Activated naive CD4-positive, alpha-beta T cell treated with anti-CD3 and anti-CD28 coated beads for 36 hours (primary cell): ENCODE measurements at regions of chr14 and their contacts with region 1.

Region 1: DNA sequence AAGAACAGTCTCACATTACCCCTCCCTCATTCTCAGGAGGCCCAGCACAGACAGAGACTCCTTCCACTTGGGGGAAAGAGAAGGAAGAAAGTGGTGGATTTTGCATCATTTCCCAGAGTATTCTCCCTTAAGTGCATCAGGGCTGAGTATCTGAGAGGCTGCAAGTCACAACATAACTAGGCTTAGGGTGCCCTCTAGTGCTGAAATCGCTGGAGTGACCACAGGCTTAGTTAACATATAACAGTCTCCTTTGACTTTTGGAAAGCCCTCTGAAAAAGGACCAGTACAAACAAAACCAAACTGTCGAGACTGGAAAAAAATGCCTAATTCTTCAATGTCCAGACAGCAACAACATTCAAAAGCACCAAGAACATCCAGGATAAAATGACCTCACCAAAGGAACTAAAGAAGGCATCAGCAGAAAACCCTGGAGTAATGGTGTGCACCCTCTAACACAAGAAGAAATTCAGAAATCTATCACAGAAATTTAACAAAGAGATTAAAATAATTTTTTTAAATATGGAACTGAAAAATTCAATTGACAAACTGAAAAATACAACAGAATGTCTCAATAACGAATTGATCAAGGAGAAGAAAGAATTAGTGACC is 412.3 kb downstream of the RPS29 start:
- DNase-seq: peak; percentile 67
- H3K4me3 Mint-ChIP-seq: no peak overlapping the region
- H3K27ac Mint-ChIP-seq: no peak overlapping the region
- H3K4me1 Mint-ChIP-seq: no peaks in the 10 kb centered on the region
- H3K27me3 Mint-ChIP-seq: peaks cover 4% of the 10 kb centered on the region

Region 2: GRCh38 chr14:48504921-48505320 is 668.9 kb before region 1 on chr14:
- CTCF ChIA-PET with region 1: no interaction called
- intact Hi-C with region 1: no loop called
- DNase-seq: no peak
- H3K4me3 Mint-ChIP-seq: no peak overlapping the region
- H3K27ac Mint-ChIP-seq: no peak overlapping the region
- H3K4me1 Mint-ChIP-seq: no peaks in the 10 kb centered on the region
- H3K27me3 Mint-ChIP-seq: no peaks in the 10 kb centered on the region

Region 3: DNA sequence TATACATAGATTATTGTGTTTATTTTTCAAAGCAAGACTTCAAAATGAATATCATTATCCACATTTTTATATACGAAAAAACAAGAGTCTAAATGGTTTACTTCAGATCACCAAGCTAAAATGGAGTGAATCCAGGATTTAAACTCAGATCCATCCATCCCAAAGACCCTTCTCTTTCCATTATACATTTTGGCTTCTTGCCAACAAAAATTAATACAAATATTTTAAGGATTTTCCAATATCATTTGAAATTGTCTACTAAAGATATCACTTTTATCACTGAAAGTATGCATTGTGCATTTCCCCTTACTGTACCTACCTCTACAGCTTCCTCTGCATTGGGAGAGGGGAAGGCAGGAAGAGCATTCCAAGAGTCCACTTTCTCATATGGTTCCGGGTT is 128.9 kb before region 1 on chr14:
- CTCF ChIA-PET with region 1: no interaction called
- intact Hi-C with region 1: loop called (anchors 5 kb)
- DNase-seq: no peak
- H3K4me3 Mint-ChIP-seq: no peak overlapping the region
- H3K27ac Mint-ChIP-seq: no peak overlapping the region
- H3K4me1 Mint-ChIP-seq: no peaks in the 10 kb centered on the region
- H3K27me3 Mint-ChIP-seq: no peaks in the 10 kb centered on the region